ENCODE measurements at regions of chr4 and their contacts with region 1.

Region 1: GRCh38 chr4:138870737-138871554 is 144.6 kb upstream of the NOCT start:
- DNase-seq: peak; percentile 77
- H3K4me3 ChIP-seq: no peak overlapping the region
- H3K27ac ChIP-seq: no peak overlapping the region
- H3K4me1 ChIP-seq: peaks cover 5% of the 10 kb centered on the region
- H3K27me3 ChIP-seq: peaks cover 3 to 6% of the 10 kb centered on the region in 2 experiments
- CTCF ChIP-seq: peak; percentile 66 to 71
- POLR2A ChIP-seq: no peak

Region 2: GRCh38 chr4:137124278-137124932 is 1746.5 kb before region 1 on chr4:
- CTCF ChIA-PET with region 1: interaction called, 16 read pairs
- POLR2A ChIA-PET with region 1: no interaction called
- dilution Hi-C with region 1: no loop called
- intact Hi-C with region 1: no loop called
- DNase-seq: peak; percentile 35
- H3K4me3 ChIP-seq: no peak overlapping the region
- H3K27ac ChIP-seq: no peak overlapping the region
- H3K4me1 ChIP-seq: no peaks in the 10 kb centered on the region
- H3K27me3 ChIP-seq: no peaks in the 10 kb centered on the region
- CTCF ChIP-seq: peak in 1 of 2 donors; percentile 42
- POLR2A ChIP-seq: no peak

Region 3: GRCh38 chr4:138035781-138036258 is 835.1 kb before region 1 on chr4:
- CTCF ChIA-PET with region 1: interaction called, 21 read pairs
- POLR2A ChIA-PET with region 1: no interaction called
- dilution Hi-C with region 1: no loop called
- intact Hi-C with region 1: loop called (anchors 1 kb)
- DNase-seq: peak; percentile 80
- H3K4me3 ChIP-seq: no peak overlapping the region
- H3K27ac ChIP-seq: peak overlapping the region; percentile 76
- H3K4me1 ChIP-seq: peaks cover 35% of the 10 kb centered on the region
- H3K27me3 ChIP-seq: no peaks in the 10 kb centered on the region
- CTCF ChIP-seq: peak; percentile 36 to 68
- POLR2A ChIP-seq: no peak

Region 4: DNA sequence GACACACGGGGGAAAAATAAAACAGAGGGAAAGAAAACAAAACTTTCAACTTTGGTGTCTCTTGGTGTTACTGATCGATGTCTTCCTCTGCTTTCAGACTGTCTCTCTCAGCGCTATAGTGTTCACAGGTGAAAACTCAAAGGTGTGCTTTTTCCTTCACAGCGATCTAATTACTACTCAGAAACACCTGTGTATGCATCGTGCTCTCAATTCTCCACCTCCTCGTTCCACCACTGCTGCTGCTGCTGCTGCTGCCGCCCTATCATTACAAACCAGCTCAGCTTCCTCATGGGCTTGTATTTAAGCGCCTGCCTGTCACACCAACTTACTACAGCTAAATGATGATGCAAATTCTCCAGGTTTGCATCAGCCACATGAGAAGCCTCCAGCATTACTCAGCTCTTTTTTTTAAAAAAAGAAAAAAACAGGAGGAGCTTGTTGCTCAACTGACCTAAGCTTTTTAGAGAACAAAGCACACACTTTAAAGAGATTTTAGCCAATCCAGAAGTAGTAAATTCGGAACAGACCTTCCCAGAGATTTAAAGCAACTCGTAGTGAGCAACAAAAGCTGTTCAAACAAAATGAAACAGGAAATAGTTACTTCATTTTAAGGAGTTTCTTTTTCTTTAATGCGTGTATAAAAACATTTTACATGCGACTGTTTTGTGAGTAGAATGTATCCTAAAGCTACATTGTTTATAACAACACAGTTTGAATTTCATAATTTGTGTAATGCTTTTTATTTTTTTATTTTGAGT is 628.7 kb before region 1 on chr4 and contains the start of gene SLC7A11:
- CTCF ChIA-PET with region 1: no interaction called
- POLR2A ChIA-PET with region 1: no interaction called
- dilution Hi-C with region 1: no loop called
- intact Hi-C with region 1: loop called (anchors 10 kb)
- DNase-seq: peak; percentile 96
- H3K4me3 ChIP-seq: peak within 1 kb of the TSS; percentile 48 to 99 (median 96)
- H3K27ac ChIP-seq: peak within 1 kb of the TSS; percentile 96
- H3K4me1 ChIP-seq: peaks cover 20% of the 10 kb centered on the region
- H3K27me3 ChIP-seq: no peaks in the 10 kb centered on the region
- CTCF ChIP-seq: no peak
- POLR2A ChIP-seq: peak; percentile 87
- total RNA-seq, gene SLC7A11: 79.3 and 82.7 TPM in 2 replicates

Region 5: GRCh38 chr4:138680989-138681604 is 189.8 kb before region 1 on chr4:
- CTCF ChIA-PET with region 1: interaction called, 43 read pairs
- POLR2A ChIA-PET with region 1: no interaction called
- dilution Hi-C with region 1: no loop called
- intact Hi-C with region 1: loop called (anchors 1 kb)
- DNase-seq: peak; percentile 58
- H3K4me3 ChIP-seq: no peak overlapping the region
- H3K27ac ChIP-seq: no peak overlapping the region
- H3K4me1 ChIP-seq: no peaks in the 10 kb centered on the region
- H3K27me3 ChIP-seq: peaks cover 24 to 48% of the 10 kb centered on the region in 2 experiments
- CTCF ChIP-seq: peak; percentile 72 to 76
- POLR2A ChIP-seq: no peak

Region 6: GRCh38 chr4:138835832-138836533 is 35.0 kb before region 1 on chr4:
- CTCF ChIA-PET with region 1: interaction called, 10 read pairs
- POLR2A ChIA-PET with region 1: no interaction called
- dilution Hi-C with region 1: no loop called
- intact Hi-C with region 1: no loop called
- DNase-seq: peak; percentile 15
- H3K4me3 ChIP-seq: no peak overlapping the region
- H3K27ac ChIP-seq: no peak overlapping the region
- H3K4me1 ChIP-seq: no peaks in the 10 kb centered on the region
- H3K27me3 ChIP-seq: peaks cover 0 to 12% of the 10 kb centered on the region in 2 experiments
- CTCF ChIP-seq: no peak
- POLR2A ChIP-seq: no peak

Region 7: GRCh38 chr4:138938366-138938690 is 67.4 kb after region 1 on chr4:
- CTCF ChIA-PET with region 1: interaction called, 80 read pairs
- POLR2A ChIA-PET with region 1: no interaction called
- dilution Hi-C with region 1: no loop called
- intact Hi-C with region 1: no loop called
- DNase-seq: peak; percentile 59
- H3K4me3 ChIP-seq: no peak overlapping the region
- H3K27ac ChIP-seq: no peak overlapping the region
- H3K4me1 ChIP-seq: no peaks in the 10 kb centered on the region
- H3K27me3 ChIP-seq: no peaks in the 10 kb centered on the region
- CTCF ChIP-seq: peak in 1 of 2 donors; percentile 28
- POLR2A ChIP-seq: no peak